Naive thymus-derived CD4-positive, alpha-beta T cell (primary cell): ENCODE measurements at regions of chr5 and their contacts with region 1.

Region 1: DNA sequence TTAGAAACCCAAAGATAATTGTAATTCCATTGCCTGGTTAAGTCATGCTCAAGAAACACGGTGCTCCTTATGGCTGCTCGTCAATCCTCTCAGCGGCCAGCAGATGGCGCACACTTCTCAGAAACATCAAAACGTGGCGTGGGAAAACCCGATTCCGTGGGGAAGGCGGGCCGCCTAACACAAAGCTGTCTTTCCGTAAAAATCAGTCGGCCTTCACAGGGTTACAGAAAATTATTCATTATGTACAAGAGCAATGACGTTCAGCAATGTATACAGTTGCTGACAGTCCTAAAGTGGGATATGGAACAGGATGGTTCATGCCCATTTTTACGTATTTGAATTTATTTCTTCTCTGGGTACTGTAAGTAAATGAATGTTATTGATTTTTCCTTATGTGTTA is 83.5 kb downstream of the PDE4D start:
- DNase-seq: peak in 8 of 9 donors; percentile 25 to 58 (median 40)
- ATAC-seq: peak; percentile 73
- H3K4me3 ChIP-seq: no peak overlapping the region
- H3K4me3 Mint-ChIP-seq: peak overlapping the region in 4 of 10 donors; percentile 24 to 66 (median 42)
- H3K27ac ChIP-seq: no peak overlapping the region
- H3K27ac Mint-ChIP-seq: no peak overlapping the region
- H3K4me1 ChIP-seq: no peaks in the 10 kb centered on the region
- H3K4me1 Mint-ChIP-seq: peaks cover 0 to 5% (median 1%) of the 10 kb centered on the region in 7 donors
- H3K27me3 ChIP-seq: no peaks in the 10 kb centered on the region
- H3K27me3 Mint-ChIP-seq: peaks cover 5 to 18% (median 15%) of the 10 kb centered on the region in 5 donors

Region 2: DNA sequence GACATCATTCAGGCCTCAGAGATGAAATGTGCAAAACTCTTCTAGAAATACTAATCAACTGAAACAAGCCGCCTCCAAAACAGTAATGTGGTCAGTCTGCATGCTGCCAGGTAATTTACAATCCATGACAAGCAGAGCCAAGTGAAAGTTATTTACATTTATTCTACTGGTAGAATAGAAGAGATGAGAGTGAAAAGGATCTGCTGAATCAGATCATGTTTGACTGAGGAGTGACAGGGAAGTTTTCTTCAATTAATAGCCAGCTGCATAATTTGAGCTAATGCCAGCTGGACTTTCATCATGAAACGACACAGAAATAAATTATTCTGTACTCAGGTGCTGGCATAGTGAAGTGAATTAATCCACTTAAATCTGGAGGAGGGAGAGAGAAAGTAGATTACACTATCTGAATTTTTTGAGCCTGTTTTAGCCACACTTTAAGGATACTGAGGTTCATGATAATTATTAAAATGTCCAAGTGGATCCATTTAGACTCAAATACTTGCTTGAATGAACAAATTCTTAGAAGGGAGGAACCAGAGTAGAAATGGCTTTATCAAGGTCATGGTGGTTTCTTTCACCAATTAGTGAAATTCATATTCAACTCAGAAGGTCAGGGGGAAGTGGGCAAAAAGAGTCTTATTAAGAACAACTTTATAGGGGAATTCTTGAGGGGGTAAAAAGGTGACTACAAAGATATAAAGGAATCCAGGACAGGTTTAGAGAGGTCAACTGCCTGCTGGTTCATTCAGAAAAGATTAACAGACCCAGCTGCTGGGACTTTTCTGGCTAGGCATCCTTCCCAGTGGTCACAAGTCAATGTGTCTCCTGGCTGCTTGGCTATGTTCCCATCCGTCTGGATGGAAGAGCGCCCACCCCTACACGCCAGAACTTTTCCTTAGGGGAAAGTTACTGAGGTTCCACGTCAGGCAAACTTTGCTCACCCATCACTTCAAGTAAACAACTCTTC is 266.9 kb before region 1 on chr5:
- CTCF ChIA-PET with region 1: no interaction called
- POLR2A ChIA-PET with region 1: no interaction called
- intact Hi-C with region 1: no loop called
- DNase-seq: no peak
- ATAC-seq: no peak
- H3K4me3 ChIP-seq: no peak overlapping the region
- H3K4me3 Mint-ChIP-seq: no peak overlapping the region
- H3K27ac ChIP-seq: no peak overlapping the region
- H3K27ac Mint-ChIP-seq: no peak overlapping the region
- H3K4me1 ChIP-seq: no peaks in the 10 kb centered on the region
- H3K4me1 Mint-ChIP-seq: no peaks in the 10 kb centered on the region
- H3K27me3 ChIP-seq: no peaks in the 10 kb centered on the region
- H3K27me3 Mint-ChIP-seq: peaks cover 0 to 4% (median 0%) of the 10 kb centered on the region in 5 donors

Region 3: DNA sequence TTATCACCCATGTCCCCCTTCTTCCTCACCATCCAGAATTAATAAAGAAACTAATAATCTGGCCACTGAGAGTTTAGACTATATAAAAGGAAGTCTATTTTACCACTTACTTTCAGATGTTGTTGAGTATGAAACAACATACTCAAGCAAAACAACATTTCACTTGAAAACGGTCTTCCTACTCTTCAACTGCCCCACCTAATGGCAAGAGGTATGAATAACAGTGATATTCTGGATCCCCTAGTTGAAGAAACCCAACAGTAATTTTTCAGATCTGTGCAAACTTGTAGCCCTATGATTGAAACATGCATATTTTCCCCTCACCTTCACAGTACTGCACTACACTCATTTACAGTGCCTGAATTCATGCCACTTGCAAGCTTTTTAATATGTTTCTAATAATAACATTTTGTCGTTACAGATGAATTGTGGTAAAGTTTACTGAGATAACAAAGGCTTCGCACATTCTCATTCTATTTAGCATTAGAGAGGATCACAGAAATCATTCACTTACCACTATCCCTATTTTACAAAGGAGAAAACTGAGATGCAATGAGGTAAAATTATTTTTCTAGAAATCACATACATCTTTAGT is 351.4 kb after region 1 on chr5:
- CTCF ChIA-PET with region 1: no interaction called
- POLR2A ChIA-PET with region 1: no interaction called
- intact Hi-C with region 1: loop called in 1 of 2 experiments (anchors 10 kb)
- DNase-seq: no peak
- ATAC-seq: no peak
- H3K4me3 ChIP-seq: no peak overlapping the region
- H3K4me3 Mint-ChIP-seq: no peak overlapping the region
- H3K27ac ChIP-seq: no peak overlapping the region
- H3K27ac Mint-ChIP-seq: no peak overlapping the region
- H3K4me1 ChIP-seq: no peaks in the 10 kb centered on the region
- H3K4me1 Mint-ChIP-seq: peaks cover 0 to 1% (median 0%) of the 10 kb centered on the region in 7 donors
- H3K27me3 ChIP-seq: no peaks in the 10 kb centered on the region
- H3K27me3 Mint-ChIP-seq: no peaks in the 10 kb centered on the region

Region 4: DNA sequence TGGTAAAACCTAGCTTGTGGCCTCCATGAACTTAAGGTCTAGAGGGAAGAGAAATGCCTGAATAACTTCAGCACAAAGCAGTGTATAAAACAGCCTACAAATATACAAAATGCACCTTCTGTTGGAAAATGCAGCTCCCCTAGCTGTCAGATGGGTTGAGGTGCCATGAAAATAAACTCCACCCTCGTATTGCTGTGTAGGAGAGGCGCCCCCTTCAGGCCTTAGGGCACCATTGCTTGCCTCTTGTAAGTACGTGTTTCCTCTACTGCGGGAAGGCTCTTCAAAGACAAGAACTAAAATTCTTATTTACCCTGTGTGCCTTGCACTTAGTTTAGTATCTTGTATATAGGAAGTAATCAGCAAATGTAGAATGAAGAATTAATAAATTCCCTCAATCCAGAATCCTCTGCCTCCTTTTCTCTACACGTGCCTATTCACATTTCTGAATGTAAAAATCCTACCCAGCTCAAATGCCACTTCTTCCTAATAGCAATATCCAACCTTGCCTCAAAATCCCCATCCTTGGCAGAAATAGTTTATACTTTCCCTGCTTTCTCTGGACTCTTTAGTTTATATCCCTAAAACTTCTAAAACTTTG is 477.2 kb after region 1 on chr5:
- CTCF ChIA-PET with region 1: no interaction called
- POLR2A ChIA-PET with region 1: no interaction called
- intact Hi-C with region 1: loop called in 1 of 2 experiments (anchors 10 kb)
- DNase-seq: no peak
- ATAC-seq: peak; percentile 61
- H3K4me3 ChIP-seq: no peak overlapping the region
- H3K4me3 Mint-ChIP-seq: no peak overlapping the region
- H3K27ac ChIP-seq: no peak overlapping the region
- H3K27ac Mint-ChIP-seq: no peak overlapping the region
- H3K4me1 ChIP-seq: no peaks in the 10 kb centered on the region
- H3K4me1 Mint-ChIP-seq: no peaks in the 10 kb centered on the region
- H3K27me3 ChIP-seq: no peaks in the 10 kb centered on the region
- H3K27me3 Mint-ChIP-seq: no peaks in the 10 kb centered on the region

Region 5: GRCh38 chr5:60382716-60383115 is 572.7 kb after region 1 on chr5:
- CTCF ChIA-PET with region 1: no interaction called
- POLR2A ChIA-PET with region 1: no interaction called
- intact Hi-C with region 1: loop called in 1 of 2 experiments (anchors 5 kb)
- DNase-seq: no peak
- ATAC-seq: no peak
- H3K4me3 ChIP-seq: no peak overlapping the region
- H3K4me3 Mint-ChIP-seq: no peak overlapping the region
- H3K27ac ChIP-seq: no peak overlapping the region
- H3K27ac Mint-ChIP-seq: no peak overlapping the region
- H3K4me1 ChIP-seq: no peaks in the 10 kb centered on the region
- H3K4me1 Mint-ChIP-seq: no peaks in the 10 kb centered on the region
- H3K27me3 ChIP-seq: no peaks in the 10 kb centered on the region
- H3K27me3 Mint-ChIP-seq: peaks cover 0 to 2% (median 0%) of the 10 kb centered on the region in 5 donors

Region 6: GRCh38 chr5:60649283-60649917 is 839.4 kb after region 1 on chr5:
- CTCF ChIA-PET with region 1: no interaction called
- POLR2A ChIA-PET with region 1: no interaction called
- intact Hi-C with region 1: loop called in 1 of 2 experiments (anchors 5 kb)
- DNase-seq: peak in 2 of 9 donors; percentile 4 to 5
- ATAC-seq: no peak
- H3K4me3 ChIP-seq: no peak overlapping the region
- H3K4me3 Mint-ChIP-seq: no peak overlapping the region
- H3K27ac ChIP-seq: no peak overlapping the region
- H3K27ac Mint-ChIP-seq: no peak overlapping the region
- H3K4me1 ChIP-seq: no peaks in the 10 kb centered on the region
- H3K4me1 Mint-ChIP-seq: peaks cover 0 to 3% (median 0%) of the 10 kb centered on the region in 7 donors
- H3K27me3 ChIP-seq: no peaks in the 10 kb centered on the region
- H3K27me3 Mint-ChIP-seq: no peaks in the 10 kb centered on the region

Region 7: DNA sequence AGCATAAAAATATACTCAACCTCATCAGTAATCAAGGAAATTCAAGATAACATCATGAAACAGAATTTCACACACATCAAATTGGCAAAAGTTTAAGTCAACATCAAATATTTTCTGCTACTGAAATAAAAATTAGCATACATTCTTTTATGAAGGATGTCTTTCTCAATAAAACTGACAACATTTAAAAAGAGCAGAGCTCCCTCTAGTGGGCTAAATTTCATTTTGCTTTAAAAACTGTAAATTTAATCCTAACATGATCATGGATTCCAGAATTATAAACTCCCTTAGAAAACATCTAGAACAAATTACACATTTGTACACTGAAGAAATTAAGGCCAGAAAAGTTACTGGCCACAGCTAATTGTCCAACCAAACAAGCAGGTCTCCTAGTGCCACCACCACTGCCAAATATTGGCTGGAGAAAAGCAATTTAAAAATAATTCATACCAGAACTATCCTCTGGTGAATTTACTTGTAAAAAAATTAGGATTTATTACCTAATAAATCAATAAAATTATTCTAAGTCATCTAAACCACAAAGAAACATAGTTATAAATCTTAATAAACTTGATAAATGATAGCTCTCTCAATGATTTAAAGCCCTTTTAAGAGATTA is 858.8 kb after region 1 on chr5:
- CTCF ChIA-PET with region 1: interaction called, 3 read pairs
- POLR2A ChIA-PET with region 1: no interaction called
- intact Hi-C with region 1: loop called in 1 of 2 experiments (anchors 1 kb)
- DNase-seq: peak in 1 of 9 donors; percentile 21
- ATAC-seq: no peak
- H3K4me3 ChIP-seq: no peak overlapping the region
- H3K4me3 Mint-ChIP-seq: no peak overlapping the region
- H3K27ac ChIP-seq: no peak overlapping the region
- H3K27ac Mint-ChIP-seq: no peak overlapping the region
- H3K4me1 ChIP-seq: no peaks in the 10 kb centered on the region
- H3K4me1 Mint-ChIP-seq: peaks cover 0 to 3% (median 0%) of the 10 kb centered on the region in 7 donors
- H3K27me3 ChIP-seq: no peaks in the 10 kb centered on the region
- H3K27me3 Mint-ChIP-seq: no peaks in the 10 kb centered on the region

Region 8: DNA sequence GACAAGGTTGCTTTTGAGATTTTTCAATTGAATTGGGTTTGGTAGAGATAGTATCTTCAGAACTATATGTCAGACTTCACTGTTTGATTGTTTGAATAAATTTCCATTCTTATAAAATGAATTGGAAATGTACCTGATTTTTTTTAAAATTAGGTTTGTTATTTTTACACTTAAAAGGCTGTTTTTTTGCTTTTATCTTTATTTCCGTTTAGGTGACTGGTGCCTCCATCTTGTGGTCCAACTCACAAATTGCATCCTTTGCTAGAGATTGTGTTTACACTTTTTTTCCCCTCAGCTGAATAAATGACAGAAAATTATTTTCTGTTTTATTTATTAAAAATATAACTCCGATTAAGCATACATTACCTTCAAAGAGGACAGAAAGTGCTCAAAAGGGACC is 1150.5 kb after region 1 on chr5:
- CTCF ChIA-PET with region 1: no interaction called
- POLR2A ChIA-PET with region 1: no interaction called
- intact Hi-C with region 1: loop called in 1 of 2 experiments (anchors 5 kb)
- DNase-seq: peak in 5 of 9 donors; percentile 18 to 48 (median 39)
- ATAC-seq: peak; percentile 54
- H3K4me3 ChIP-seq: no peak overlapping the region
- H3K4me3 Mint-ChIP-seq: peak overlapping the region in 1 of 10 donors; percentile 9
- H3K27ac ChIP-seq: no peak overlapping the region
- H3K27ac Mint-ChIP-seq: peak overlapping the region in 1 of 9 donors; percentile 8
- H3K4me1 ChIP-seq: no peaks in the 10 kb centered on the region
- H3K4me1 Mint-ChIP-seq: peaks cover 0 to 30% (median 17%) of the 10 kb centered on the region in 7 donors
- H3K27me3 ChIP-seq: no peaks in the 10 kb centered on the region
- H3K27me3 Mint-ChIP-seq: no peaks in the 10 kb centered on the region